H1 (cell line): ENCODE measurements at regions of chr11 and their contacts with region 1.

Region 1: GRCh38 chr11:18791207-18791968 is at the start of gene PTPN5:
- DNase-seq: peak in 1 of 2 experiments; percentile 77
- H3K4me3 ChIP-seq: peak within 1 kb of the TSS; percentile 73 to 97 (median 78)
- H3K27ac ChIP-seq: no peak within 1 kb of the TSS
- H3K4me1 ChIP-seq: peaks cover 2 to 8% (median 3%) of the 10 kb centered on the region in 4 experiments; a peak in 6 of 7 replicates
- H3K27me3 ChIP-seq: peaks cover 0 to 33% (median 22%) of the 10 kb centered on the region in 4 experiments; a peak in 6 of 7 replicates
- CTCF ChIP-seq: no peak
- EP300 ChIP-seq: no peak
- POLR2A ChIP-seq: peak; percentile 23 to 65
- RAD21 ChIP-seq: no peak
- total RNA-seq, gene PTPN5: 6.8 and 8.4 TPM in 2 replicates

Region 2: DNA sequence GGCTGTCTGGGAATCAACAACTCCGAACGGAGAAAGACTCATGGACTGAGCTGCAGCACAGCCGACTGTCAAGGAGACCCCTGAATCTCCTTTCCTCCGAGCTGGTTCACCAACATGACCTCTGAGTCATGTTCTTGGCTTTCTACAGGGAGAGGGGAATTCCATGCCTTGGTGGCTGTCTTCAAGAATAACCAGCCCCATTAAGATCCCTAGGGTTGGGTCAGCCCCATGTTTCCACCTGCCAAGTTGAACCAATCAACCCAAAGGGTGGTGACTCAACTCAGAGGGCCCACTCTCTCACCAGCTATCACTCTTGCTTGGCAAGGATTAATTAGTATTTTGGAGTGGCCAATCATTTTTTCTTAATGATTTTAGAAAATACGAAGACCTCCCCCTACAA is 37.1 kb before region 1 on chr11:
- CTCF ChIA-PET with region 1: no interaction called
- POLR2A ChIA-PET with region 1: no interaction called
- DNase-seq: no peak
- H3K4me3 ChIP-seq: no peak overlapping the region
- H3K27ac ChIP-seq: no peak overlapping the region
- H3K4me1 ChIP-seq: peaks cover 0 to 7% (median 3%) of the 10 kb centered on the region in 4 experiments; a peak in 4 of 7 replicates
- H3K27me3 ChIP-seq: no peaks in the 10 kb centered on the region
- CTCF ChIP-seq: no peak
- EP300 ChIP-seq: no peak
- POLR2A ChIP-seq: no peak
- RAD21 ChIP-seq: no peak

Region 3: GRCh38 chr11:18802381-18803257 is 11.2 kb after region 1 on chr11:
- CTCF ChIA-PET with region 1: interaction called, 50 read pairs
- POLR2A ChIA-PET with region 1: interaction called, 4 read pairs
- DNase-seq: peak in 1 of 2 experiments; percentile 54
- H3K4me3 ChIP-seq: no peak overlapping the region
- H3K27ac ChIP-seq: no peak overlapping the region
- H3K4me1 ChIP-seq: no peaks in the 10 kb centered on the region
- H3K27me3 ChIP-seq: no peaks in the 10 kb centered on the region
- CTCF ChIP-seq: peak; percentile 23 to 69 (median 61)
- EP300 ChIP-seq: no peak
- POLR2A ChIP-seq: no peak
- RAD21 ChIP-seq: peak; percentile 72 to 80